GM12878 (cell line): ENCODE measurements at regions of chr20 and their contacts with region 1.

Region 1: GRCh38 chr20:2206957-2207769 is 88.6 kb upstream of the TGM3 start:
- DNase-seq: peak; percentile 19
- ATAC-seq: peak; percentile 96
- H3K4me3 ChIP-seq: peak overlapping the region; percentile 63; the same call in 1 of the 2 replicates
- H3K27ac ChIP-seq: no peak overlapping the region
- H3K4me1 ChIP-seq: peaks cover 3% of the 10 kb centered on the region; the same call in 1 of the 2 replicates
- H3K27me3 ChIP-seq: no peaks in the 10 kb centered on the region; a peak in 1 of 4 replicates
- CTCF ChIP-seq: peak; percentile 71 to 79 (median 74)
- EP300 ChIP-seq: peak; percentile 16 to 32; a peak in 1 of 4 replicates
- POLR2A ChIP-seq: no peak
- RAD21 ChIP-seq: peak; percentile 76

Region 2: GRCh38 chr20:2217857-2218539 is 10.8 kb after region 1 on chr20:
- CTCF ChIA-PET with region 1: interaction called, 10 read pairs
- POLR2A ChIA-PET with region 1: no interaction called
- RAD21 ChIA-PET with region 1: interaction called, 4 read pairs
- SMC1A ChIA-PET with region 1: interaction called, 4 read pairs
- in situ Hi-C with region 1: no loop called
- intact Hi-C with region 1: no loop called
- DNase-seq: peak; percentile 20
- ATAC-seq: no peak; the same call in 2 of the 3 replicates
- H3K4me3 ChIP-seq: no peak overlapping the region
- H3K27ac ChIP-seq: 0 out of 2 replicates have a peak overlapping the region, but pooled peaks have one; percentile 38
- H3K4me1 ChIP-seq: peaks cover 9% of the 10 kb centered on the region; the same call in 1 of the 2 replicates
- H3K27me3 ChIP-seq: no peaks in the 10 kb centered on the region
- CTCF ChIP-seq: no peak
- EP300 ChIP-seq: no peak
- POLR2A ChIP-seq: no peak
- RAD21 ChIP-seq: no peak

Region 3: GRCh38 chr20:2254333-2254732 is 47.2 kb after region 1 on chr20:
- CTCF ChIA-PET with region 1: interaction called, 4 read pairs
- POLR2A ChIA-PET with region 1: no interaction called
- RAD21 ChIA-PET with region 1: no interaction called
- SMC1A ChIA-PET with region 1: interaction called, 3 read pairs
- in situ Hi-C with region 1: no loop called
- intact Hi-C with region 1: loop called (anchors 5 kb)
- DNase-seq: no peak
- ATAC-seq: no peak
- H3K4me3 ChIP-seq: no peak overlapping the region
- H3K27ac ChIP-seq: no peak overlapping the region
- H3K4me1 ChIP-seq: no peaks in the 10 kb centered on the region
- H3K27me3 ChIP-seq: peaks cover 1 to 4% of the 10 kb centered on the region in 2 experiments; a peak in 3 of 4 replicates
- CTCF ChIP-seq: no peak
- EP300 ChIP-seq: no peak
- POLR2A ChIP-seq: no peak
- RAD21 ChIP-seq: no peak

Region 4: GRCh38 chr20:2349818-2350508 is 142.8 kb after region 1 on chr20:
- CTCF ChIA-PET with region 1: interaction called, 10 read pairs
- POLR2A ChIA-PET with region 1: no interaction called
- RAD21 ChIA-PET with region 1: interaction called, 5 read pairs
- SMC1A ChIA-PET with region 1: interaction called, 4 read pairs
- in situ Hi-C with region 1: no loop called
- intact Hi-C with region 1: loop called (anchors 5 kb)
- DNase-seq: no peak
- ATAC-seq: no peak
- H3K4me3 ChIP-seq: no peak overlapping the region
- H3K27ac ChIP-seq: no peak overlapping the region
- H3K4me1 ChIP-seq: no peaks in the 10 kb centered on the region
- H3K27me3 ChIP-seq: peaks cover 0 to 2% of the 10 kb centered on the region in 2 experiments; a peak in 2 of 4 replicates
- CTCF ChIP-seq: no peak
- EP300 ChIP-seq: no peak
- POLR2A ChIP-seq: no peak
- RAD21 ChIP-seq: no peak

Region 5: GRCh38 chr20:2446845-2447244 is 239.7 kb after region 1 on chr20:
- CTCF ChIA-PET with region 1: interaction called, 78 read pairs
- POLR2A ChIA-PET with region 1: no interaction called
- RAD21 ChIA-PET with region 1: interaction called, 27 read pairs
- SMC1A ChIA-PET with region 1: interaction called, 29 read pairs
- in situ Hi-C with region 1: no loop called
- intact Hi-C with region 1: loop called (anchors 1 kb)
- DNase-seq: no peak
- ATAC-seq: no peak
- H3K4me3 ChIP-seq: no peak overlapping the region
- H3K27ac ChIP-seq: no peak overlapping the region
- H3K4me1 ChIP-seq: no peaks in the 10 kb centered on the region
- H3K27me3 ChIP-seq: no peaks in the 10 kb centered on the region
- CTCF ChIP-seq: no peak
- EP300 ChIP-seq: no peak
- POLR2A ChIP-seq: no peak
- RAD21 ChIP-seq: no peak